Lower lobe of right lung (tissue), 2 donors: ENCODE measurements at regions of chr1 and their contacts with region 1.

Region 1: GRCh38 chr1:22641906-22642636 is 1.4 kb upstream of the C1QC start:
- DNase-seq: peak; percentile 88
- ATAC-seq: peak; percentile 82 to 85
- H3K4me3 ChIP-seq: no peak overlapping the region
- H3K27ac ChIP-seq: no peak overlapping the region
- H3K4me1 ChIP-seq: peaks cover 4% of the 10 kb centered on the region
- H3K27me3 ChIP-seq: peaks cover 19% of the 10 kb centered on the region
- CTCF ChIP-seq: peak; percentile 96

Region 2: GRCh38 chr1:22420455-22421053 is 221.5 kb before region 1 on chr1:
- intact Hi-C with region 1: loop called (anchors 10 kb)
- DNase-seq: peak; percentile 89
- ATAC-seq: peak; percentile 93 to 94
- H3K4me3 ChIP-seq: no peak overlapping the region
- H3K27ac ChIP-seq: no peak overlapping the region
- H3K4me1 ChIP-seq: no peaks in the 10 kb centered on the region
- H3K27me3 ChIP-seq: peaks cover 22% of the 10 kb centered on the region
- CTCF ChIP-seq: peak; percentile 80